ENCODE measurements at regions of chr19 and their contacts with region 1.

Region 1: DNA sequence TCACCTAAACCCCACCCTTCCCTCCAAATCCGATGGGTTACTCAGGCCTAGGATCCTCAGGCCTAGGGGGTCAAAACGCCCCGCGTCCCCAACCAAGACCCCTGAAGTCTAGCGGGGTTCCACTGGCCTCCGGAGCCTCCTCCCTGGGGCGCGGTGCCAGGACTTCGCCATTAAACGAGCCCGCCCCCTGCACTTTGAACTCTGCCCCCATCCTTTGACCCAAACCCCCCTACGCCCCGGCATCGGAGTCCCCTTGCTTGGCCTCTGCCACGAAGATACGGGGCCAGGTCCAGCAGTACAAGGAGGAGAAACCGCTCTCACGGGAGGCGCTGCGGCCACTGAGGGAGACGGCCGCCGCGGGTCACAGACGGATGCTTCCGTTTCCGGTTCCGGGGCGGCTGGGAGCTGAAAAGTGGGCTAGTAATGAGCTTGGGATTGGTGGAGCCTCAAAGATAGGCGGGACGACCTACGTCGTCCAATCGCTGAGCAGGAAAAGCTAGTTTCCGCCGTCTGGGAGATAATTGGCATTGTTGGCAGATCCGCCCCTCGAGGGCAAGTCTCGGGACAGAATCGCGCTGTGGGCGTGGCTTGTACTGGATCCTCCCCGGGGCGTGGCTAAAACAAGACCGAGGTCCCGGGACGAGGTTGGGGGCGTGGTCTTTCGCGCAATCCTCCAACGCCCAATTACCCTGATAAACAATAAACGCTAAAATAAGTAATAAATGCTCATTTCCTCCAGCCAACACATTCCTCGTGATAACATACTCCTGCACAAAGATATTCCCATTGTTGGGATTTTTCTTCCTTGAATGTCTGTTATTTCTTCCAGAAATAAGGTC is 5.7 kb upstream of the ZNF77 start:
- DNase-seq: peak; percentile 97
- H3K4me3 Mint-ChIP-seq: peak overlapping the region; percentile 91
- H3K27ac Mint-ChIP-seq: peak overlapping the region; percentile 97
- H3K4me1 Mint-ChIP-seq: peaks cover 7% of the 10 kb centered on the region
- H3K27me3 Mint-ChIP-seq: no peaks in the 10 kb centered on the region
- CTCF ChIP-seq: no peak

Region 2: DNA sequence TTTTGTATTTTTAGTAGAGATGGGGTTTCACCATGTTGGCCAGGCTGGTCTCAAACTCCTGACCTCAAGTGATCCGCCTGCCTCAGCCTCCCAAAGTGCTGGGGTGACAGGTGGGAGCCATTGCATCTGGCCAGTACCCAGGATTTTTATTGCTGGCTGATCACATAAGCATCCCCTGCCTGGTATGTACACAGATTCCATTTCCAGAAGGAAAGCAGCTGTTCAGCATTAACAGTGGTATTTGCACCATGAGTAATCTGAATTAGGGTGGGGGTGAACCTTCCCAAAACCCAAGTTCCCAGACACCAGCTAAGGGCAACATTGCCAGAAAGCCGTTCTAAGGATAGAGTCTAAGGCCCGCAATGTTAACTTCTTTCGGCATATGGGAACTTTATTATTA is 101.9 kb before region 1 on chr19:
- CTCF ChIA-PET with region 1: no interaction called
- intact Hi-C with region 1: no loop called
- DNase-seq: no peak
- H3K4me3 Mint-ChIP-seq: no peak overlapping the region
- H3K27ac Mint-ChIP-seq: no peak overlapping the region
- H3K4me1 Mint-ChIP-seq: no peaks in the 10 kb centered on the region
- H3K27me3 Mint-ChIP-seq: no peaks in the 10 kb centered on the region
- CTCF ChIP-seq: no peak

Region 3: GRCh38 chr19:2887391-2887914 is 63.1 kb before region 1 on chr19:
- CTCF ChIA-PET with region 1: interaction called, 12 read pairs
- intact Hi-C with region 1: no loop called
- DNase-seq: peak; percentile 13
- H3K4me3 Mint-ChIP-seq: no peak overlapping the region
- H3K27ac Mint-ChIP-seq: no peak overlapping the region
- H3K4me1 Mint-ChIP-seq: peaks cover 10% of the 10 kb centered on the region
- H3K27me3 Mint-ChIP-seq: no peaks in the 10 kb centered on the region
- CTCF ChIP-seq: no peak

Region 4: DNA sequence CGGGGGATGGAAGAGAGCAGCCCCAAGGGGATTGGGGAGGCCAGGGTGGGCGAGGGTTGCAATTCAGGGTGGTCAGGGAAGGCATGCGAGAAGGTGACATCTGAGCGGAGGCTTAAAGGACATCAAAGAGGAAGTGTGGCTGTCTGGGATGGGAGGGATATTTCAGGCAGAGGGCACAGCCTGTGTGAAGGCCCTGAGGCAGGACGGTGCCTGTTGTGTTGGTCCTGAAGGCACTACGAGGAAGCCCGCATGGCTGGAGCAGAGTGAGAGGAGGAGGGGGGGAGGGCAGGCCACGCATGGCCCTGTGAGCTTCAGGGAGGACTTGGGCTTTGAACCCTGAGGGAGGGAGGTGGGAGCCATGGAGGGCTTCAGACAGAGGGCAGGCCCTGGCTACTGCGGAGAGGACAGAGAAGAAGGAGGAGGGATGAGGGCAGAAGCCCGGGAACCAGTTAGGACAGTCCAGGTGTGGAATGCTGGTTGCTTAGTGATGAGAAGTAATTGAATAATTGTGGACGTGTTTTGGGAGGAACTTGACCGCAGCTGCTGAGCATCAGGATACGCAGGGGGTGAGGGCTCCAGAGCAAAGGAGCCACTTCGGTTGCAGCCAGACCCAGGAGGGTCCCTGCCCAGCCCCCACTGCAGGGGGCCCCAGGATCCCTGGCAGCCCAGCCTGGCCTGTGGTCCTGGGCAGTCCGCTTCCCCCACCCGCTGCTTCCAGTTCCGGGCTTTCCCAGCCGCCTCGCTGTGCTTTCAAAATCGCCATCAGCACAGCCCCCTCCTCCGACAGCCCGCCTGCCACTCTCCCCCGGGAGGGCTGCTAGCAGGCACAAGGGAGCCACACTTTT is 33.1 kb after region 1 on chr19:
- CTCF ChIA-PET with region 1: no interaction called
- intact Hi-C with region 1: no loop called
- DNase-seq: peak; percentile 13
- H3K4me3 Mint-ChIP-seq: no peak overlapping the region
- H3K27ac Mint-ChIP-seq: no peak overlapping the region
- H3K4me1 Mint-ChIP-seq: no peaks in the 10 kb centered on the region
- H3K27me3 Mint-ChIP-seq: peaks cover 20% of the 10 kb centered on the region
- CTCF ChIP-seq: no peak